Head of caudate nucleus (tissue), 42 donors: ENCODE measurements at regions of chr20 and their contacts with region 1.

Region 1: GRCh38 chr20:35619196-35620095 is 3.8 kb downstream of the SPAG4 start:
- DNase-seq: peak; percentile 53 to 95 (median 83)

Region 2: DNA sequence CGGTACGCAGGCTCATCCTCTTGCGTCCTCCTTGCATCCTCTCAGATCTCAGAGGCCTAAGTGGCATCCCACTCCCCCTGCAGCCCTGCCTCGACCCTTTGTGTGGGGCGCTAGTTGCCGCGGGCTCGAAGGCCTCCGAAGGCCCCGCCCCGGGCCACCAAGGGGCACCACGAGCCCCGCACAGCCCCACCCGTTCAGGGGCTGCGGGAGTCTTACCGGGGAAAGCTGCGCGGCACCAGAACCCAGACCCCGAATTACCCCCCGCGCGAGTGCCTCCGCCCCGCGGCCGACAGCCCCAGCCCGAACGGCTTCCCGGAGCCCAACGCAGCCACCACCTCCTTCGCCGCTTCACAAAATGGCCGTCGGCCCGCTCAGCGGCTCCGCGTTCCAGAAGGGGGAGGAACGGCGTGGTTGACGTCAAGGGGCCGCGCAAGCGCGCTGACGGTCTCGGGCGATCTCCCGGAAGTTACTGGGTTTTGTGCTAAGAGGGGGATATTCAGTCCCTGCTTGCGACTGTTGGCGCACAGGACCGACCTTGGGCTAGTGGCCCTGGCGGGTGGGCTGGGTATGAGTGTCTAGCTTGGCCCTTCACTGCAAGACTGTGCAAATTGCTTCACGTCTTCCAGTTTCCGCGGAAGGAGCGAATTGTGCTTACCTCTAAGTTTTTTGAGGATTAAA is 45.2 kb after region 1 on chr20 and contains the starts of genes CPNE1 and RBM12:
- intact Hi-C with region 1: loop called (anchors 10 kb)
- DNase-seq: peak; percentile 85 to 97 (median 94)